ENCODE measurements at regions of chr14 and their contacts with region 1.

Region 1: GRCh38 chr14:77151918-77152588 is 10.5 kb upstream of the ZDHHC22 start:
- DNase-seq: no peak
- ATAC-seq: peak in 3 of 4 donors; percentile 81 to 83 (median 82)
- H3K4me3 ChIP-seq: no peak overlapping the region
- H3K27ac ChIP-seq: no peak overlapping the region
- H3K4me1 ChIP-seq: no peaks in the 10 kb centered on the region
- H3K27me3 ChIP-seq: no peaks in the 10 kb centered on the region
- CTCF ChIP-seq: no peak

Region 2: DNA sequence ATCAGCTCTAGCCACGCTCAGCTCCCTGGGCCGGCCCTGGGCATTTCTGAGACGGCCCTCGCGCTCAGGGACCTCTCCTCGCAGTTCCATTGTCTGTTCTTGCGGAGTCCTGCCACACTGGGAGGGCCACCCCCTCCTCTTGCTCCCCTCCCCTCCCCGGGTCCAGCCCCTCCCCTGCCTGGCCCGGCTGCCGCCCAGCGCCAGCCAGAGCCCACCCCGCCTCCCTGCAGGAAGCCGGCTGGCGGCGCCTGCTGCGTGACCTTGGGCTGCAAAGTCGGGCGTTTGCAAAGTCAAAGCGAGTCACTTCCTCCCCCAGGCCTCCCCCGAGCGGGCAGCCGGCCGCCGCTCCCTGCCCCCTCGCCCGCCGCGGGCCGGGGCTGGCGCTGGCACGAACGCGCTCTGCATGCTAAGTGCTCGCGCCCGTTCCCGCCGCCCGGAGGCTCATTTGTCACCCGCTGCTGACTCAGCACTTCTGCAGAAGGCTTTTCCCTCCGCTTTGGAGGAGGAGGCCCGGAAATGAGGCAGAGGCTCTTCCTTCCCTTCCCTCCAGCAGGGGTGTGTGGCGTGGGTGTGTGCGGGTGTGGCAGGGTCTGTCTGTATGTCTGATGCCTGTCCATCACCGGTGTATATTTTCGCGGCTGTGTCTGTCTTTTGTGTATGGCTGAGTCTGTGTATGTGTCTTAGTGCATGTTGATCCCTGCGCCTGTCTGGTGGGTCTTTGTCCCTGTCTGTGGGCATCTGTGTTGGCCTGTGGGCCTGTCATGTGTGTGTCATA is 195.6 kb before region 1 on chr14:
- intact Hi-C with region 1: no loop called
- DNase-seq: peak; percentile 91 to 95 (median 94)
- ATAC-seq: peak; percentile 87 to 94 (median 91)
- H3K4me3 ChIP-seq: peak overlapping the region in 3 of 4 donors; percentile 4 to 38 (median 31)
- H3K27ac ChIP-seq: peak overlapping the region; percentile 68 to 96 (median 86)
- H3K4me1 ChIP-seq: peaks cover 7 to 42% (median 17%) of the 10 kb centered on the region in 3 donors
- H3K27me3 ChIP-seq: no peaks in the 10 kb centered on the region
- CTCF ChIP-seq: no peak

Region 3: DNA sequence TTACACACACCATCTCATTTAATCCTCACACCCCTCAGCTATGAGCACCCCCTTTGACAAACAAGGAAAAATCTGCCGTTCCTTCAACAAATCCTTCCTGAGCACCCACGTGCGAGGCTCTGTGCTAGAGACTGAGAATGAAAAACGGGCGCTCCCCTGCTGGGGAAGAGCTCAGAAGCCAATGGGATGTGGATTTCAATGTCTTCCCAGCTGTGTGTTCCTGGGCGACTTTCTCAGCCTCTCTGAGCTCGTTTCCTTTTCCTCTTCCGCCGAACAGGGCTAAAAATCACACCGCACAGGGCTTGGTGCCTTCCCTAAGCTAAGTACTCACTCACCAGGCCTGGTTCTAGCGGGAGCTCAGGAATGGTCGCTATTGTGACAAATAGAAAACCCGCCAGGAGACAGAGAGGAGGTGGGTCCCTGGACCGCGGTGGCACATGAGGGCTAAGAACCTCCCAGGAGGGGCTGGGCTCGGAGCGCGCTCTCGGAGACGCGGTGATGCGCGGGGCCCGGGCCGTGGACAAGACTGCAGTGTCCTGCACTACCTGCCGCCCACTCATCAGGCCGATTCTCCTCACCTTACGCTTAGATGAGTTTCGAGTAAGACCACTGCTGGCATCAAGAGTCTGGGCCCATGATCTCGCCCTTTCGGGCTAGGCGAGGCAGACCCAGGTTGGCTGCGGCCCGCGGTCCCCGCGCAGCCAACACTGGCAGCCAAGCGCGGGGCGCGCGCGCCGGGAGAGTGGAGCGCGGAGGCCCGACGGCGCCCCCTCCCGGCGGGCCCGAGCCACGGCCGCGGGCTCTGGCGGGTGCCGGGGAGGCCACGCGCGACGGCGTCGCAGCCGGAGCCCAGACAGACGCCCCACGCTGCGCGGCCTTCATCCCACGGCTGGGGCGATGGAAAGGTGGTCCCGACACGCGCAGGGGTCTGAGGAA is 27.4 kb before region 1 on chr14:
- intact Hi-C with region 1: no loop called
- DNase-seq: peak; percentile 36 to 88 (median 54)
- ATAC-seq: peak; percentile 49 to 82 (median 70)
- H3K4me3 ChIP-seq: peak overlapping the region; percentile 5 to 42 (median 30)
- H3K27ac ChIP-seq: no peak overlapping the region
- H3K4me1 ChIP-seq: peaks cover 13 to 20% (median 15%) of the 10 kb centered on the region in 3 donors
- H3K27me3 ChIP-seq: no peaks in the 10 kb centered on the region
- CTCF ChIP-seq: peak; percentile 16 to 73 (median 22)

Region 4: GRCh38 chr14:77208291-77208969 is 56.4 kb after region 1 on chr14:
- intact Hi-C with region 1: no loop called
- DNase-seq: peak; percentile 60 to 94 (median 81)
- ATAC-seq: peak; percentile 75 to 95 (median 79)
- H3K4me3 ChIP-seq: no peak overlapping the region
- H3K27ac ChIP-seq: no peak overlapping the region
- H3K4me1 ChIP-seq: no peaks in the 10 kb centered on the region
- H3K27me3 ChIP-seq: no peaks in the 10 kb centered on the region
- CTCF ChIP-seq: no peak

Region 5: GRCh38 chr14:77314043-77314442 is 162.0 kb after region 1 on chr14:
- intact Hi-C with region 1: loop called in 1 of 3 experiments (anchors 10 kb)
- DNase-seq: no peak
- ATAC-seq: no peak
- H3K4me3 ChIP-seq: no peak overlapping the region
- H3K27ac ChIP-seq: no peak overlapping the region
- H3K4me1 ChIP-seq: peaks cover 0 to 7% (median 0%) of the 10 kb centered on the region in 3 donors
- H3K27me3 ChIP-seq: no peaks in the 10 kb centered on the region
- CTCF ChIP-seq: no peak